GM18951 (cell line): ENCODE measurements at regions of chr16 and their contacts with region 1.

Region 1: GRCh38 chr16:11955713-11956123 is 9.3 kb upstream of the TNFRSF17 start:
- POLR2A ChIP-seq: no peak

Region 2: GRCh38 chr16:11896777-11897176 is 58.9 kb before region 1 on chr16:
- in situ Hi-C with region 1: no loop called
- POLR2A ChIP-seq: no peak

Region 3: DNA sequence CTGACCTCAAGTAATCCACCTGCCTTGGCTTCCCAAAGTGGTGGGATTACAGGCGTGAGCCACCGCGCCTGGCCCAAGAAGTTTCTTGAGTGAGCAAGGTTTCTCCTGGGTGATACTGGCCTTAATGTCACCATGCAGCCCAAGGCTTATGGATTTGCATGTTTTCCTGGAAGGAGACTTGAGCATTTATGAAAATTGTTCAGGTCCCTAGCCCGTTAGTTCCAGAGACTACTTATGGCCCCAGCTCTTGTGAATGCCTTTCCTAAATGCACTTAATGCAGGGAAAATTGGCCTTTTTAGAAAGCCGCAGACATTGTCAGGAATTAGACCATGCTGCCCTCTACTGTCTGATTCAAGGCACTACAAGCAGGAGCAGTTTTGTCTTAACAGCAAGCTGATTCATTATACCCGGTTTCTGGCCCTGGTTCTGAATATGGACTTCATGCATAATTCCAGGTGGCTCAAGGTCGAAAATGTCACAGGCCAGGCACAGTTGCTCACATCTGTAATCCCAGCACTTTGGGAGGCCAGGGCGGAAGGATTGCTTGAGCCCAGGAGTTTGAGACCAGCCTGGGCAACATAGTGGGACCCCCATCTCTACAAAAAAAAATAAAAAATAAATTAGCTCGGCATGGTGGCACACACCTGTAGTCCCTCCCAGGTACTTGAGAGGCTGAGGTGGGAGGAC is 112.1 kb after region 1 on chr16:
- in situ Hi-C with region 1: loop called (anchors 5 kb)
- POLR2A ChIP-seq: no peak